ENCODE measurements at regions of chr7 and their contacts with region 1.

Region 1: DNA sequence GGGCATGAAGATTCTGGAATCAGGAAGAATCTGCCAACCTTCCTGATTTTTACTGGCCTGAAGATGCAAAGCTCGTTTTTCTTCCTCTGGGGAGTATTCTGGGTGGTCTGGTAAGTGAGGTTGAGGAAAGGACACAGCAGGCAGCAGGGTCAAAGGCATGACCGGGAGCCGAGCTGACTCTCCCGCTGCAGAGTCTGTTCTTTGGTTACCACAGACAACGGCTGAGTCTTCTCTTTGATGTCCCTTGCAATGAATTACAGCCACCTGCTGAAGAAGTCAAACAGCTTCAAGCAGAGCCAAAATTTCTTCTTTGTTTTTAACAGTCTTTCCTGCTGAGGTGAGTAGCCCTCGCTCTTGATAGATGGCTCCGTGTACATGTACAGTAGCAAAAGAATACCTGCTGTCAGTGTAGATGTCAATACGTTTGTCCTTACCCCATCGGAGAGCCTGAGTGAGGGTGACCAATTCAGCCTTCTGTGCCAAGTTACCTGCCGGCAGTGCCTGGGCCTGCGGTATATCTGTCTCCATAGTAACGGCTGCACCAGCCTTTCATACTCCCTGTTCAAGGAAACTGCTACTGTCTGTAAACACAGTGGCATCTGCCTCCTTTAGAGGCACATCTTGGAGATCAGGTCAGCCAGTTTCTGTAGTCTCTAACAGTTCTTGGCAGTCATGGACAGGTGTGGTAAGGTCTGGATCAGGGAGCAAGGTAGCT is 76.4 kb downstream of the PRR15 start:
- DNase-seq: no peak
- H3K4me3 ChIP-seq: no peak overlapping the region
- H3K27ac ChIP-seq: no peak overlapping the region
- H3K4me1 ChIP-seq: no peaks in the 10 kb centered on the region
- H3K27me3 ChIP-seq: no peaks in the 10 kb centered on the region

Region 2: GRCh38 chr7:29915481-29916215 is 275.6 kb after region 1 on chr7:
- in situ Hi-C with region 1: loop called (anchors 10 kb)
- DNase-seq: peak; percentile 33
- H3K4me3 ChIP-seq: no peak overlapping the region
- H3K27ac ChIP-seq: no peak overlapping the region
- H3K4me1 ChIP-seq: no peaks in the 10 kb centered on the region
- H3K27me3 ChIP-seq: no peaks in the 10 kb centered on the region

Measured in GM23248 (cell line).